B cell (primary cell): ENCODE measurements at regions of chr19 and their contacts with region 1.

Region 1: GRCh38 chr19:7919610-7920518 is at the start of gene SNAPC2:
- DNase-seq: peak; percentile 99
- ATAC-seq: peak; percentile 56
- H3K4me3 ChIP-seq: peak within 1 kb of the TSS; percentile 55 to 84 (median 75)
- H3K4me3 Mint-ChIP-seq: peak within 1 kb of the TSS; percentile 95
- H3K27ac ChIP-seq: peak within 1 kb of the TSS; percentile 73 to 74
- H3K27ac Mint-ChIP-seq: peak within 1 kb of the TSS; percentile 96
- H3K4me1 ChIP-seq: peaks cover 57 to 61% of the 10 kb centered on the region in 2 donors
- H3K4me1 Mint-ChIP-seq: peaks cover 48% of the 10 kb centered on the region
- H3K27me3 ChIP-seq: peaks cover 0 to 42% (median 24%) of the 10 kb centered on the region in 4 experiments
- H3K27me3 Mint-ChIP-seq: peaks cover 22% of the 10 kb centered on the region
- CTCF ChIP-seq: no peak
- total RNA-seq, gene SNAPC2: 19.3 and 19.9 TPM in 2 replicates

Region 2: DNA sequence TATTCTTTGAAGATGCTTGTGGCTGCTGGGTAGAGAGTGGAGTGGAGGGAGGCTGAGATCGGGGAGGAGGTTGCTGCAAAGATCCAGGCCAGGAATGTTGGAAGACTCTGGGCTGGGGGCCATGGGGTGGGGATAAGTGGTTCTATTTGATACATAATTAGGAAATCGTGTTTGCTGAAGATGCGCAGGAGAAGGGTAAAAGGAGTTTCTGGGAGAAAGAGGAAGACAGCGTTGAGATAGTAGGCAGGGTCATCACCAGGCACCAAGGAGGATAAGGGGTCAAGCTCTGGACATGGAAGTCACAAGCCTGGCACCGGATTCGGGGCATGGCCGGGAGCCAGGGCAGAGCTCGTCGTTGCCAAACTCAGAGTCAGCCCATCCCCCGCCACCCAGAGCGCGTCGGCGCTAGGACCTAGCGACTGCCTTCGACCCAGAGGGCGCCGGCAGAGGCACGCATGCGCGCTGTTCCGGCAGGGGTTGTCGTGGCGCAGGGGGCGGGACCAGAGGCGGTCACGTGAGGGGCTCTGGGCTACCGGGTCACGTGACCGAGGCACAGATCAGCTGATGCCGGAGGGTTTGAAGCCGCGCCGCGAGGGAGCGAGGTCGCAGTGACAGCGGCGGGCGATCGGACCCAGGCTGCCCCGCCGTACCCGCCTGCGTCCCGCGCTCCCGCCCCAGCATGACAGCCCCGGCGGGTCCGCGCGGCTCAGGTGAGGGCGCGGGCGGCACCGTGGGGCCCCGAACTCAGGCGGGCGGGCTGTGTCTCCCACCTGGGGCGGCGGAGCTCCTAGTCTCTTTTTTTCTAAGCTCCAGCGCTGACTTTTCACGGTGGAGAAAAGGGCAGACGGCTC is 397.6 kb before region 1 on chr19 and contains the start of gene MCOLN1:
- CTCF ChIA-PET with region 1: no interaction called
- POLR2A ChIA-PET with region 1: no interaction called
- intact Hi-C with region 1: loop called (anchors 1 kb)
- DNase-seq: peak; percentile 99
- ATAC-seq: peak; percentile 96
- H3K4me3 ChIP-seq: peak within 1 kb of the TSS; percentile 48 to 75 (median 67)
- H3K4me3 Mint-ChIP-seq: peak within 1 kb of the TSS; percentile 91
- H3K27ac ChIP-seq: peak within 1 kb of the TSS in 1 of 2 donors; percentile 55
- H3K27ac Mint-ChIP-seq: peak within 1 kb of the TSS; percentile 94
- H3K4me1 ChIP-seq: peaks cover 13 to 19% of the 10 kb centered on the region in 2 donors
- H3K4me1 Mint-ChIP-seq: peaks cover 12% of the 10 kb centered on the region
- H3K27me3 ChIP-seq: no peaks in the 10 kb centered on the region
- H3K27me3 Mint-ChIP-seq: no peaks in the 10 kb centered on the region
- CTCF ChIP-seq: no peak
- total RNA-seq, gene MCOLN1: 12.5 TPM in 2 replicates

Region 3: DNA sequence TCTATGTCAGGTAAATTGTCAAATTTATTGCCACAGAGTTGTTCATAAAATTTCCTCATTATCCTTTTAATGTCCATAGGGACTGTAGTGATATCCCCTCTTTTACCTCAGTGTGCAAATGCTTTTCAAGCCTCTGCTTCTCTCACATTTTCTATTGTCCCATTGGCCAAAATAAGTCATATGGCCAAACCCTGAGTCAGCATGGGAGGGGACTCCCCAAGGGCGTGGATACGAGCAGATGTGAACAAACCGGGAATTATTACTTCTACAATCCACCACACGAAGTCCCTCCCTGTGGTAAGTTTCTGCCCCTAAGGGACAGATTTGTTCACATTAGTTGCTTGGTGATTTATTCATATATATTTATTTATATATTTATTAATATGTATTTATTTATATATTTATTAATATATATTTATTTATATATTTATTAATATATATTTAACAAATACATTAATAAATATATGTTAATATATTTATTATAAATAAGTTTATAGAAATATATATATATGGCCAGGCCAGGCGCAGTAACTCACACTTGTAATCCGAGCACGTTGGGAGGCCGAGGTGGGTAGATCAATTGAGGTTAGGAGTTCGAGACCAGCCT is 344.3 kb before region 1 on chr19:
- CTCF ChIA-PET with region 1: no interaction called
- POLR2A ChIA-PET with region 1: no interaction called
- intact Hi-C with region 1: no loop called
- DNase-seq: no peak
- ATAC-seq: no peak
- H3K4me3 ChIP-seq: no peak overlapping the region
- H3K4me3 Mint-ChIP-seq: no peak overlapping the region
- H3K27ac ChIP-seq: no peak overlapping the region
- H3K27ac Mint-ChIP-seq: no peak overlapping the region
- H3K4me1 ChIP-seq: no peaks in the 10 kb centered on the region
- H3K4me1 Mint-ChIP-seq: no peaks in the 10 kb centered on the region
- H3K27me3 ChIP-seq: no peaks in the 10 kb centered on the region
- H3K27me3 Mint-ChIP-seq: peaks cover 10% of the 10 kb centered on the region
- CTCF ChIP-seq: no peak

Region 4: DNA sequence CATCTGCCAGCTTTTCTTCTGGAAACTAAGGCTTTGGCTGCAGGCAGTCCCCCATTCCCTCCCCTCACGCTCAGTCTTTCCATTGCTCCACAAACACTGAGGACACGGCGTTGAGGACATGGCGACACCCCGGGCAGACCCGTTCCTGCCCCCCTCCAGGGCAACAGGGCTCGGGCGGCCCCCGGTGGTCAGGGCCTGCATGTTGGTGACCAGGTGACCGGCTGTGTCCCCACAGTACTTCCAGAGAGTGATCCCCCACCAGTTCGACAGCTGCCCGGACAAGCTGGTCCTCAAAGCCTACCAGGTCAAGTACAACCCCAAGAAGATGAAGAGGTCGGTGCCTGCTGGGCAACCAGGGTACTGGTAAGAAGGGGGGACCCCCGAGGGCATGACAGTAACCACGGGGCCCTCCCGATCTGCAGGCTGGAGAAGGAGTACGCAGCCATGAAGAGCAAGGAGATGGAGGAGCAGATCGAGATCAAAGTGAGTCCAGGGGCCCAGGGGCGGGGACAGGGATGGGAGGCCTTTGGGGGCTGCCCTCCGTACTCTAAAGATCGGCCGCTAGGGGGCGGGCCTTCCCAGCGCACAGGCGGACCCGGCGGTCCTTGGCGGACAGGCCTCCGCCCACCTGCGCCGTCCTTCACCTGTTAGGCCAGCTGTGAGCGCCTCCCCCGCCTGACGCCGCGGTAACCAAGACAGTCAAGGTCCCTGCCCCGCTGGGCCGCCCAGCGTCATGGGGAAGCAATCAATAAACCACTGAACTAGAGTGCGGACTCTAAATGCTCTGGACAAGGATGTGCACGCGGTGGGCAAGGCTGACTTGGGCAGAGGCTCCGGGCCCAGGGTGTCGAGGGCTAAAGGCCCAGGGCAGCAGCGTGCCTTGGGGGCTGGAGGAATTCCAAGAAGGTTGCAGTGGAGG is 66.8 kb before region 1 on chr19:
- CTCF ChIA-PET with region 1: interaction called, 13 read pairs
- POLR2A ChIA-PET with region 1: interaction called, 4 read pairs
- intact Hi-C with region 1: no loop called
- DNase-seq: peak; percentile 81
- ATAC-seq: peak; percentile 89
- H3K4me3 ChIP-seq: no peak overlapping the region
- H3K4me3 Mint-ChIP-seq: no peak overlapping the region
- H3K27ac ChIP-seq: no peak overlapping the region
- H3K27ac Mint-ChIP-seq: no peak overlapping the region
- H3K4me1 ChIP-seq: peaks cover 6 to 7% of the 10 kb centered on the region in 2 donors
- H3K4me1 Mint-ChIP-seq: peaks cover 8% of the 10 kb centered on the region
- H3K27me3 ChIP-seq: peaks cover 0 to 33% (median 0%) of the 10 kb centered on the region in 4 experiments
- H3K27me3 Mint-ChIP-seq: peaks cover 3% of the 10 kb centered on the region
- CTCF ChIP-seq: peak; percentile 86

Region 5: DNA sequence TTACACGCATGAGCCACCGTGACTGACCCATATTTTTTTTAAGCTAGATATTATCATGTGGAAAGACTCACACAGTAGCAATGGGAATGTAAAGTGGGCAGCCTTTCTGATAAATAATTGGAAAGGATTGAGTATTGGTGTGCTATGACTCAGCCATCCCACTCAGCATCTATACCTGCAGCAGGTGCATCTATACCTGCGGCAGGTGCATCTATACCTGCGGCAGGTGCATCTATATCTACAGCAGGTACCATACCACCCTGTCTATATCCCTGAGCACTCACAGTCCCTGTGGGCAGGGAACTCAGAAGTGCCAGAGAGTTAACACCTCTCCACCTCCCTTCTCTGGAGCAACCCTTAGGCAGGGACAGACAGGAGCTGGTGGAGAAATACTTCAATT is 36.8 kb before region 1 on chr19:
- CTCF ChIA-PET with region 1: no interaction called
- POLR2A ChIA-PET with region 1: interaction called, 10 read pairs
- intact Hi-C with region 1: no loop called
- DNase-seq: no peak
- ATAC-seq: no peak
- H3K4me3 ChIP-seq: no peak overlapping the region
- H3K4me3 Mint-ChIP-seq: no peak overlapping the region
- H3K27ac ChIP-seq: no peak overlapping the region
- H3K27ac Mint-ChIP-seq: no peak overlapping the region
- H3K4me1 ChIP-seq: no peaks in the 10 kb centered on the region
- H3K4me1 Mint-ChIP-seq: no peaks in the 10 kb centered on the region
- H3K27me3 ChIP-seq: peaks cover 0 to 13% (median 1%) of the 10 kb centered on the region in 4 experiments
- H3K27me3 Mint-ChIP-seq: peaks cover 5% of the 10 kb centered on the region
- CTCF ChIP-seq: no peak

Region 6: DNA sequence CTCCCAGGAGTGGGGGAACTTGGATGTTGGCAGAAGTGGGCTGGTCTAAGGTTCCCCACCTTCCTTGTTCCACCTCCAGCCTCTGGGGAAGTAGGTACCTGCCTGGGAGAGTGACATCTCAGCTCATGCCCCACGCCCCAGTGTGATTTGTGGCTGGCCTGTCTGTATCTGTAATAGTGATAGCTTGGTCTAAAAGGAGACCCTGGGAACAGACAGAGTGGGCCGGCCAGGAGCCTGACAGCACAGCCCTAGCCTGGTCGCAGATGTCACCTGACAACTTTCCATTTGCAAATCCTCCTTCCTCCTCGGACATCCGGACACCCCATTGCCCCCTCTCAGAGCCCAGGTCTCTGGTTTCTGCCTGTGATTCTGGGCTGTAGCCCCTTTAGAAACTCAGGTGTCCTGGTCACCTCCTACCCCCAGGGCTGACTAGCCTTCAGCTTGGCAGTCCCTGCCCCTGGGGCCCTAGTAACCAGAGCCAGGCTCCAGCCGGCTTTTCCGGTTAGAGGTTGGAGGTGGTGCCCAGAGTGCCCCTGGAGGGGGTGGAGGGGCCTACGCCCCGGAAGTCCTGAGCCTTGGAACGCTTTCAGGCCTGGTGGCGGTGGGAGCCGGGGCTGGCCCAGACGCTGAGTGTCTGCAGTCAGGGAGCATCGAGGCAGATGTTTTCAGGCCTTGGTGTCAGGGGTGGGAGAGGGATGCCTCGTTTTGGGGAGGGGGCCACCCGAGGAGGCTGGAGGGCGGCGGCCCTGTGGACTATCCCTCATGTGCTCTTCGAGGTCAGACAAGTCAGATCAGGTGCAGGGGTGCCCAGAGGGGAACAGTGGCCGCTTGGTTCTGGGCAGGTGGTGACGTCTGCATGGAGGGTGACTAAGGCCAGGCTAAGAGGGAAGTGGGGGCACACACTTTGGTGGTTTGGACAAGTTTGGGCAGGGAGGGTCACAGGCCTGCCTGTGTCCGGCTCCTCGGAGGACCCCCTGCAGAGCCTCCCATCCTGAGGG is 25.0 kb before region 1 on chr19:
- CTCF ChIA-PET with region 1: no interaction called
- POLR2A ChIA-PET with region 1: no interaction called
- intact Hi-C with region 1: no loop called
- DNase-seq: no peak
- ATAC-seq: no peak
- H3K4me3 ChIP-seq: no peak overlapping the region
- H3K4me3 Mint-ChIP-seq: no peak overlapping the region
- H3K27ac ChIP-seq: no peak overlapping the region
- H3K27ac Mint-ChIP-seq: no peak overlapping the region
- H3K4me1 ChIP-seq: no peaks in the 10 kb centered on the region
- H3K4me1 Mint-ChIP-seq: no peaks in the 10 kb centered on the region
- H3K27me3 ChIP-seq: peaks cover 0 to 14% (median 1%) of the 10 kb centered on the region in 4 experiments
- H3K27me3 Mint-ChIP-seq: peaks cover 21% of the 10 kb centered on the region
- CTCF ChIP-seq: no peak

Region 7: DNA sequence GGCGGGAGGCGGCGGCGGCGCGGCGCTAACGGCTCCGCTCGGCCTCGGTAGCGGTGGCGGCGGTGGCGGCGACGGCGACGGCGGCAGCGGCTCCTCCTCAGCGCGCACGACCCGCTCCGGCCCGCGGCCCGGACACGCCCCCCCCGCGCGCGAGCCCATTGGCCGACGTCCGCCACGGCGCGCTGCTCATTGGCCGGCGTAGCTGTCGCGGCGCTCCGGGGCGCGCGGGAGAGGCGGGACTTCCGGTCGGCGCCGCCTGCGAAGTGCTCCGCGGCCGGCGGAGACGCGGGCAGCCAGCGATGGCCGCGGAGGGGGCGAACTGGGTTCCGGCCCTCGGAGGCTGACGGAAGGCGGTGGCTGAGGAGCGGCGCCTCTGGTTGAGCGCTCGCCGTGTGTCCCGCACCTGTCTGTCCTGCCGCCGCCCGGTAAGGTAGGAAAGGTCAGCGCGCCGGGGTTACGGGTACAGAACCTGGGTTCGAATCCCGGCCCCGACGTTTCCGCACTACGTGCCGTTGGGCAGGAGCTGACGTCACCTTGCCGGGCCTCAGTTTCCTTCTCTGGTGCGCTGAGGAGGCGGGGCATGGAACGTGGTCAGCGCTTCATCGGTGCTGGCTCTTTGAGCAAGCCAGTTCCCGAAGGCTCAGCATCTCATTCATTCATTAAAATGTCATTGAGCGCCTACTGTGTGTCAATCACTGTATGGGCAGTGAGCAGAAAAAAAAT is 85.8 kb after region 1 on chr19 and contains the start of gene ELAVL1:
- CTCF ChIA-PET with region 1: interaction called, 5 read pairs
- POLR2A ChIA-PET with region 1: interaction called, 4 read pairs
- intact Hi-C with region 1: loop called (anchors 1 kb)
- DNase-seq: peak; percentile 93
- ATAC-seq: peak; percentile 92
- H3K4me3 ChIP-seq: peak within 1 kb of the TSS; percentile 74 to 88 (median 86)
- H3K4me3 Mint-ChIP-seq: peak within 1 kb of the TSS; percentile 95
- H3K27ac ChIP-seq: peak within 1 kb of the TSS; percentile 62 to 87
- H3K27ac Mint-ChIP-seq: peak within 1 kb of the TSS; percentile 85
- H3K4me1 ChIP-seq: peaks cover 25 to 42% of the 10 kb centered on the region in 2 donors
- H3K4me1 Mint-ChIP-seq: peaks cover 37% of the 10 kb centered on the region
- H3K27me3 ChIP-seq: no peaks in the 10 kb centered on the region
- H3K27me3 Mint-ChIP-seq: no peaks in the 10 kb centered on the region
- CTCF ChIP-seq: no peak
- total RNA-seq, gene ELAVL1: 58.3 and 63.5 TPM in 2 replicates